ENCODE measurements at regions of chr10 and their contacts with region 1.

Region 1: DNA sequence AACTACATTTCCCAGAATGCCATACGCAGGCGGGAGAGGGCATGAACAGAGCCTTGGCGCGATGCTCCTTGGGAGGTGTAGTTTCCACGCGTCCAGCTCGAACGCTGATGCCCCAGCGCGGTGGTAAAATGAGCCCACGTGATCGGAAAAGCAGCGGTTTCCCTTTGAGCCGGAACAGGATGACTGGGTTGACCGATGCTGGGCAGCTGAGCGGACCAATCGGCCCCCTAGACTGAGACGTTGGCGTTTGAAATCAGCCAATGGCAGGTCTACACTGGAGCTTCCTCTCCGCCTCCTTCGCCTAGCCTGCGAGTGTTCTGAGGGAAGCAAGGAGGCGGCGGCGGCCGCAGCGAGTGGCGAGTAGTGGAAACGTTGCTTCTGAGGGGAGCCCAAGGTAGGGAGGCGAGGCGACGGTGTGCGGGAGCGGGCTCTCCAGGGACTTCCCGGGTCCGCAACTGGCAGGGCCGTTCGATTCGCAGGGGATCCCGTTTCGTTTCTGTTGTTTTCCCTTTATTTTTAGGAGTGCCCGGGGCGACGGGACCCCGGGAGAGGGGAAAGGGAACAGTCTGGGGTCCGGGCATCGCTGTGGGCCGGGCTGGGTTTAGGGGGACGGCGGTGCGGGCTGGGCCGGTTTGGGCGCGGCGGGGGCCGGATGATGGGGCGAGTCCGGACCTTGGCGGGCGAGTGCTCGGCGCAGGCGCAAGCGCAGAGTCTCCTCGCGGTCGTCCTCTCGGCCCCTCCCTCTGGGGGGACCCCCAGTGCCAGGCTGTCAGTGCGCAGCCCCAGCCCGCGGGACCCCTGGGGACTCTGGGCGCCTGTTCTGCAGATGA is at the start of gene BUB3:
- DNase-seq: peak; percentile 98
- H3K4me3 Mint-ChIP-seq: peak within 1 kb of the TSS; percentile 97
- H3K27ac Mint-ChIP-seq: peak within 1 kb of the TSS; percentile 100
- H3K4me1 Mint-ChIP-seq: peaks cover 71% of the 10 kb centered on the region
- H3K27me3 Mint-ChIP-seq: peaks cover 3% of the 10 kb centered on the region
- total RNA-seq, gene BUB3: 293 to 307 TPM

Region 2: DNA sequence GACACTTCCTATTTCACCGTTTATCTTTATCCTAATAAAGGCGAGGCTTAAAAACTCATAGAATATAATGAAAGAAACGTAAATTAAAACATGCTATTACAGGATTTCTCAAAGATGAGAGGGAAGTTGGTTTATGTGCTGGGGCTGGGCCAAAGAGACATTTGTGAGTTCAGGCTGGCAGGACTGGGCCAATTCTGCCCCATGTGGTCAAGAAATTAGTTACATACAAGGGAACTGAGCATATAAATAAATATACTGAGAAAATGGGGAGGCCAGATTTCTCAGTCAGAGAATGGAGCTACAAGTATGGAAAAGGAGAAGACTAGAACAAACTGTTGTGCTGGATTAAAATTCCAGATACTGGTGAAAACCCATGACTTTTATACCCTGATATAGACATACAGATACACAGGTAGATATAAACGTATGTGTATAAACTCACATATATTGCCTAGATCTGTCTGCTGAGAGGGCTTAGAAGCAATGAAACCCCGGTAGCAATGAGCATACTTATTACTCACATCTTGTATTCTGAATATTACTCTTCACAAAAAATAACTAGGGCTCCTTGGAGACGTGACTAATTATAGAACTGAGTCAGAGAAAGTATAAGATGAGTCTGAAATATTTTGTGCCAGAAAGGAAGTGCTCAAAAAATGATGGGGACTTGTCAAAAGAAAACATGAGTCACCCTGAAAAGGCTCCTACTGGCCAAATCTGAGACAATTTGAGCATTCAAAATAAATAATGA is 1400.4 kb before region 1 on chr10:
- CTCF ChIA-PET with region 1: no interaction called
- intact Hi-C with region 1: loop called (anchors 10 kb)
- DNase-seq: peak; percentile 24
- H3K4me3 Mint-ChIP-seq: no peak overlapping the region
- H3K27ac Mint-ChIP-seq: peak overlapping the region; percentile 27
- H3K4me1 Mint-ChIP-seq: peaks cover 19% of the 10 kb centered on the region
- H3K27me3 Mint-ChIP-seq: no peaks in the 10 kb centered on the region

Region 3: GRCh38 chr10:122879339-122880273 is 274.7 kb before region 1 on chr10 and contains the start of gene FAM24B:
- CTCF ChIA-PET with region 1: no interaction called
- intact Hi-C with region 1: loop called (anchors 2 kb)
- DNase-seq: peak; percentile 95
- H3K4me3 Mint-ChIP-seq: peak within 1 kb of the TSS; percentile 82
- H3K27ac Mint-ChIP-seq: peak within 1 kb of the TSS; percentile 90
- H3K4me1 Mint-ChIP-seq: peaks cover 45% of the 10 kb centered on the region
- H3K27me3 Mint-ChIP-seq: peaks cover 3% of the 10 kb centered on the region
- total RNA-seq, gene FAM24B: 8.0 to 8.1 TPM

Region 4: DNA sequence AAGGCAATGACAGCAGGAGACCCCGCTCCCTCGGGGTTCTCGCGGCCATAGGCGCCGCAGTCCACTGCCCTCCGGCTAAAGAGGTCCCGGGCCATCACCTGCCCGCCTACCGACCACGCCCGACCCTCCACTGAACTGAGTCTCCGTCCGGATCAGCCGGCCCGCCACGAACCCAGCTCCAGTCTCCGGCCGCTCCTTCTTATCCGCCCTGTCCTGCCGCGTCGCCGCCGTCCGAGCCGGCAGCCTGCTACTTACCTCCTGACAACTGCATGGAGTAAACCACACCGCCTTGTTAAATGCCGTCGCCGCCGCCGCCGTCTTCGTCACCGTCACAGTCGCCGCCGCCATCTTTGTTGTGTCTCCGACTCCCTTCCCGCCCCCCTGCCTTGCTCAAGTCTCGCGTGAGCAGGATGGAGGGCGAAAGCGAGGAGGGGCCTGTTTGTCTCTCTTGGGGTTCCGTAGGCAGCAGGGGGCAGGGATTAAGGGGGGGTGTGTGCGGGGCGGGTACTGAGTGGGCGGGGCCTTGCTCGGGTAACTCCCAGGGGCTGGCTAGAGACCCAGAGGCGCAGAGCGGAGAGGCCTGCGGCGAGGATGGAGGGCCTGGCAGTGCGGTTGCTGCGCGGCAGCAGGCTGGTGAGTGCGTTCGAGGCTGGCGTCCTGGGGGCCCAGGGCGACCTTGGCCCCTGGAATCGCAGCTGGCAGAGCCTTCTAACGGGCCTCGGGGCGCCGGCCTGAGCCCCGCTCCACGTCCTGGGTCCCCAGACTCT is 145.7 kb before region 1 on chr10 and contains the starts of genes ACADSB and IKZF5:
- CTCF ChIA-PET with region 1: no interaction called
- intact Hi-C with region 1: loop called (anchors 1 kb)
- DNase-seq: peak; percentile 98
- H3K4me3 Mint-ChIP-seq: peak within 1 kb of the TSS; percentile 100
- H3K27ac Mint-ChIP-seq: peak within 1 kb of the TSS; percentile 98
- H3K4me1 Mint-ChIP-seq: peaks cover 34% of the 10 kb centered on the region
- H3K27me3 Mint-ChIP-seq: no peaks in the 10 kb centered on the region
- total RNA-seq, gene ACADSB: 19.8 to 21.8 TPM
- total RNA-seq, gene IKZF5: 15.3 to 16.2 TPM

Region 5: DNA sequence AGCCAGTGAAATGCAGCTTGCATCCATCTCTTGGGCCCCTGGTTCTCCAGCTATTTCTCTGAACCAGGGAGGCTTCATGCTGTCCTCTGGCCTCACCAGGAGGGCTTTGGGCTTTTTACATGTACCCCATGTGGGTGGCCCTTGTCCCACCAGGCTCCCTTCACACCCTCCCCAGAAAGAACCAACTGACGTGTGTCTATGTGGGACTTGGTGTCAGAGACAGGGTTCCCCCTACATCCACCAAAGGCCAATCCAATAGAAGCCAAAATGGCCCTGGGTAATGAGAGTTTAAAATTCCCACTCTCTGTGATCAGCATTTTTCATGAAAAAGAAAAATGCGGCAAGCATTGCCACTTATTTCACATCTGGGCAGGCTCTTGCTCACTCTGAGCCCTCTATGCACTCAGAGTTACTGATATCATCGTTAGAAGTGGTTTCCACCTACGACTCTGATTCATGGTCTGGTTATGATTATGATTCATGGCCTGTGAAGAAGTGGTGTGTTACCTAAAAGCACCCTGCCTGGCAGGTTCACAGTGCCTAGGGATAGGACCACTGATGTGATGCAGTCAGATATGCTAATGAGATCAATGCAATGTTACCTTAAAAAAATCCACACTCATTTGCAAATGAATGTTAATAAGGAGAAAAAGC is 133.4 kb after region 1 on chr10:
- CTCF ChIA-PET with region 1: no interaction called
- intact Hi-C with region 1: loop called (anchors 1 kb)
- DNase-seq: peak; percentile 78
- H3K4me3 Mint-ChIP-seq: no peak overlapping the region
- H3K27ac Mint-ChIP-seq: peak overlapping the region; percentile 78
- H3K4me1 Mint-ChIP-seq: peaks cover 19% of the 10 kb centered on the region
- H3K27me3 Mint-ChIP-seq: peaks cover 2% of the 10 kb centered on the region

Region 6: GRCh38 chr10:124461438-124462347 is 1307.4 kb after region 1 on chr10 and contains the start of gene LHPP:
- CTCF ChIA-PET with region 1: no interaction called
- intact Hi-C with region 1: loop called (anchors 5 kb)
- DNase-seq: peak; percentile 90
- H3K4me3 Mint-ChIP-seq: peak within 1 kb of the TSS; percentile 77
- H3K27ac Mint-ChIP-seq: peak within 1 kb of the TSS; percentile 88
- H3K4me1 Mint-ChIP-seq: peaks cover 27% of the 10 kb centered on the region
- H3K27me3 Mint-ChIP-seq: peaks cover 2% of the 10 kb centered on the region
- total RNA-seq, gene LHPP: 17.7 TPM

Measured in activated naive CD4-positive, alpha-beta T cell treated with anti-CD3 and anti-CD28 coated beads for 36 hours (primary cell).